ENCODE measurements at regions of chr17 and their contacts with region 1.

Region 1: DNA sequence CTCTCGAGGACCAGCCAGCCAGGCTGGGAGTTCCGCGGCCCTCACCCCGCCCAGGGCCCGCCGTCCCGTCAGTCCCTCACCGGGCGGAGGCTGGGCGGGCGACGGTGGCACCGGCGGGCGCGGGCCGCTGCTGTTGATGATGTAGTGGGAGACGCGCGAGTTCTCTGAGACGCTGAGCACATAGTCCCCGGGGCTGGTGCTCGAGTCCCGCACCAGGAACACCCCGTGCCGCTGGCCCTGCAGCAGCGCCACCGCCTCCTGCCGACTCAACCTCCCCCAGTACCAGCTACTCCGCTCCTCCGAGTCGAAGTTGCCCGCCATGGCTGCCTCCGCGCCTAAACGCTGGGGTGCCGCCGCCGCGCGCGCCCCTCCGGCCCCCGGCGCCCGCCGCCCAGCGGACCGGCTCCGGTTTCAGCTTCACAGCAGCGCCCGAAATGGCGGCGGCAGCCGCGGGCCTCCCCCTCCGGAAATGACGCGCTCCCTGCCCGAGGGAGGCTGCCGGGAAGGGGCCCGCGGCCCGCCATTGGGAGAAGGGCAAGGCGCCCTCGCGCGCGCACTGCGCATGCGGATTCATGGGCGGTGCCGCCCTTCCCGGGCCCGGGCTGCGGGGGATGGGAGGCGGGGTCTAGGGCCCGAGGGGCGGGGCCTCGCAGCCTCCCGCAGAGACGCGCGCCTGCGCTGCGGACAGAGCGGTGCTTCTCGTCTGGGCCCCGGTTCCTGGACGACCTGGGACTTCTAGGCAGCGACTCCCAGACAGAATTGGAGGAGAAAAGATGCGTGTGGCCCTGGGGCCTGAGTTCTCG is at the start of gene CRK:
- DNase-seq: peak; percentile 97 to 100 (median 99)
- ATAC-seq: peak; percentile 97
- H3K4me3 ChIP-seq: peak within 1 kb of the TSS; percentile 94
- H3K4me3 Mint-ChIP-seq: peak within 1 kb of the TSS; percentile 86 to 95 (median 90)
- H3K27ac ChIP-seq: peak within 1 kb of the TSS; percentile 97
- H3K27ac Mint-ChIP-seq: peak within 1 kb of the TSS; percentile 63 to 92 (median 86)
- H3K4me1 ChIP-seq: peaks cover 18 to 37% of the 10 kb centered on the region in 2 donors
- H3K4me1 Mint-ChIP-seq: peaks cover 28 to 64% (median 48%) of the 10 kb centered on the region in 7 donors
- H3K27me3 ChIP-seq: no peaks in the 10 kb centered on the region
- H3K27me3 Mint-ChIP-seq: peaks cover 0 to 23% (median 4%) of the 10 kb centered on the region in 5 donors
- total RNA-seq, gene CRK: 16.9 to 29.0 (median 20.9) TPM

Region 2: GRCh38 chr17:1390433-1391367 is 65.3 kb before region 1 on chr17:
- CTCF ChIA-PET with region 1: no interaction called
- POLR2A ChIA-PET with region 1: no interaction called
- intact Hi-C with region 1: no loop called
- DNase-seq: no peak
- ATAC-seq: peak; percentile 48
- H3K4me3 ChIP-seq: no peak overlapping the region
- H3K4me3 Mint-ChIP-seq: peak overlapping the region; percentile 1 to 73 (median 28)
- H3K27ac ChIP-seq: peak overlapping the region; percentile 6
- H3K27ac Mint-ChIP-seq: peak overlapping the region; percentile 32 to 69 (median 50)
- H3K4me1 ChIP-seq: peaks cover 56 to 78% of the 10 kb centered on the region in 2 donors
- H3K4me1 Mint-ChIP-seq: peaks cover 48 to 95% (median 68%) of the 10 kb centered on the region in 7 donors
- H3K27me3 ChIP-seq: no peaks in the 10 kb centered on the region
- H3K27me3 Mint-ChIP-seq: no peaks in the 10 kb centered on the region

Region 3: DNA sequence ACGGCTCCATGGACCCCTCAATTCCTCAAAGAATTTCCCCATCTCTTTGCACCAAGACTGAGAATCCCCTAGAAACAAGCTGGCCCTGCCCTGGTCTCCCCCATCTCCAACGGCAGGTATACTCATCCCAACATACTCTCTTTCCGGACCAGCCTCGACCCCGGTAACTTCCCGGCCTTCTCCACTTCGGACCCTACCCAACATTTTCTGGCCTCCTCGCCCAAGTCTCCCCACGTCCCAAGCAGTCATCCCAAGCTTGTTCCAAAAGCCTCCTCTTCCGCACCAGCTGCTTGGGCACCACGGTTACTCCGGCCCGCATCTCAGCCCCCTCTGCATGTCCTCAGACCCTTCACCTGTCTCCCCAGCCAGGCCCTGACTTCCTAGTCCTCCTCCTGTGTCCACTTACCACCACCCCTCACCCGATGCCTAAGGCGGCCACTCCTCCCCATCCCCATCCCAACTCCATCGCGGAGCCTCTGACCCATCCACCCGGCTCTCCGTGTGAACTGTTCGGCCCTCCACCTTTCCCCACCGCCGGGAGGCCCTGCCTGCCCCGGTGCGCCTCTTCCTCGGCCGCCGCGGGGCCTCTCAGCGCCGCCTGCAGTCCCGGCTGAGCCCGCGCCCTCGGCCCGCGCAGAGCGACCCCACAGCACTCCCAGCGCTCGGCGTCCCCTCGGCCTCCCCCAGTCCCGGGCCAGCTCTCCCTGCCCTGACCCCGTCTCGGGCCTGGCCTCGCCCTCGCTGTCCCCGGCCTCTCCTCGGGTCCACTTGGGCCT is 105.6 kb after region 1 on chr17:
- CTCF ChIA-PET with region 1: no interaction called
- POLR2A ChIA-PET with region 1: no interaction called
- intact Hi-C with region 1: loop called (anchors 1 kb)
- DNase-seq: peak in 8 of 9 donors; percentile 28 to 58 (median 36)
- ATAC-seq: peak; percentile 37
- H3K4me3 ChIP-seq: peak overlapping the region; percentile 39
- H3K4me3 Mint-ChIP-seq: peak overlapping the region; percentile 73 to 89 (median 82)
- H3K27ac ChIP-seq: peak overlapping the region; percentile 76
- H3K27ac Mint-ChIP-seq: peak overlapping the region in 8 of 9 donors; percentile 54 to 90 (median 76)
- H3K4me1 ChIP-seq: peaks cover 9 to 12% of the 10 kb centered on the region in 2 donors
- H3K4me1 Mint-ChIP-seq: peaks cover 25 to 54% (median 43%) of the 10 kb centered on the region in 7 donors
- H3K27me3 ChIP-seq: no peaks in the 10 kb centered on the region
- H3K27me3 Mint-ChIP-seq: peaks cover 0 to 13% (median 0%) of the 10 kb centered on the region in 5 donors

Region 4: DNA sequence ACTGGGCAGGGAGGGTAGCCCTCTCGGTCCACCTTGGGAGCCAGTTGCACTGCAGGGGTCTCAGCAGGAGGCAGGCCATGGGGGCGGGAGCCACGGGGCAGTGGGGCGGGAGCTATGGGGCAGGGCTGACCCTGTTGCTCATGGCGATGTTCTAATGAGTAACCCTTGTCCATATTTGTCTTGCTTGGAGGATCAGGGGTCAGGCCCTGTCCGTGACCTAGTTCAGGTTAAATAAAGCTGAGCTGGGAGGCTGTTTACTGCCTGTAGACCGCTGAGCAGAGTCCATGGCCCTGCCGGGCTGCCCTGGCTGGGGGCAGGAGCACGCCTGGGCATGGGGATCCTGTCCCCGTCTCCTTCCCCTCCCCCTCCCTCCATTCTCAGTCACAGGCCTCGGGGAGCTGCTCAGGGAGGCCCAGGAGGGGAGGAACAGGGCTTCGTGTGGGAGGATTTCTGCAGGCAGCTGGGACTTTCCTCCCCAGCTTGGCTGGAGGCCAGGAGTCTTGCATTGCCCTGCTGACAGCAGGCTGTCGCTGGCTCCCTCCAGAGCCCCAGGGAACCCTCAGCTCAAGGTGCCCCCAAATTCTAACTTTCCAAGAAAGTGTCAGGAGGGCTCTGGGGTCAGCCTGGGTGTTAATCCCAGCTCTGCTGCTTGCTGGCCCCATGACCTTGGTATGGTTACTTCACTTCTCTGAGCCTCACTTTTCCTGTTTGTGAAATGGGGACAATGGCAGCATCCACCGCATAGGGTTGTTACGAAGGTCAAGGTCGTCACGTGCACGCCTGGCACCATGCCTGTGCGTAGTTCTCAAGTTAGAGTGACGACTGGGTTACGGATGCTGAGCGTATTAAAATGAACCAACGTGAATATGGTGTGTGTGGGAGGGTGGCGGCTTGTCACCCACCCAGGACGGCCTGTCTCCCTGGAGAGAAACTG is 280.6 kb after region 1 on chr17:
- CTCF ChIA-PET with region 1: no interaction called
- POLR2A ChIA-PET with region 1: no interaction called
- intact Hi-C with region 1: no loop called
- DNase-seq: peak in 1 of 9 donors; percentile 57
- ATAC-seq: no peak
- H3K4me3 ChIP-seq: no peak overlapping the region
- H3K4me3 Mint-ChIP-seq: no peak overlapping the region
- H3K27ac ChIP-seq: no peak overlapping the region
- H3K27ac Mint-ChIP-seq: peak overlapping the region in 3 of 9 donors; percentile 65 to 81 (median 81)
- H3K4me1 ChIP-seq: no peaks in the 10 kb centered on the region
- H3K4me1 Mint-ChIP-seq: peaks cover 0 to 17% (median 0%) of the 10 kb centered on the region in 7 donors
- H3K27me3 ChIP-seq: no peaks in the 10 kb centered on the region
- H3K27me3 Mint-ChIP-seq: no peaks in the 10 kb centered on the region

Measured in naive thymus-derived CD4-positive, alpha-beta T cell (primary cell).